Heart left ventricle (tissue), 16 donors: ENCODE measurements at regions of chr11 and their contacts with region 1.

Region 1: DNA sequence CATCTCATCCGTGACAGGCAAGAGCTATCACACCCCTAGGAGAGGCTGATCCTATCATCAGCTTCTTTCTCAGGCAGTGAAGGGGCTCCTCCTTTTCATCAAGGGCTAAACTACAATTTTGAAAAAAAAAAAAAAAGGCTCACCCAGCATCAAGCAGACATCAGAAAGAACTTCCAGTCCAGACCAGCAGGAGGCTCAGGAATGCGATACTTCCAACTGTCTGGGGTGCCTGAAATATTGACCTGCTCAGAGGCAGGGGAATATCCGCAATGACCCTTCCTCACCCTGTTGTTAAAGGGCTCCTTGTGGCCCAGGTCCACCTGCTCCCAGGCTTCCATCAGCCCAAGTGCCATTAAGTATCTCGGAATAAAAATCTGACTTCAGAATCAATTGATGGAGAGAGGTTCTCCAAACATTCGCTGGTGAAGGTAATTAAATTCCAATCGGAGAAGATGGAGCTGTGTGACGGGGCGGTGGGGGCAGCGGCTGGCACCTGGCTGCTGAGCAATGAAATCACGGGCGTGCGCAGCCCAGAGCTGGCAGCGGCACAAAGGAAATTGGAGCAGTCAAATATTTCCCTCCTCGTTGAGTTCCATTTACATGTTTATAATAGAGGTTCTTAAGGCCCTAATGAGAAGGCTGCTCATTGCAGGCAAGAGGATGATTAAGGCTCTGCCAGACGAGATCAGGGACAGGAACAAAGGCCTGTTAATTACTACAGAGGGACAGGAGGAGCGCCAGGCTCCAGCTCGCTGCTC is 69.0 kb upstream of the THY1 start:
- DNase-seq: peak in 1 of 5 donors; percentile 9
- ATAC-seq: no peak
- H3K4me3 ChIP-seq: no peak overlapping the region
- H3K27ac ChIP-seq: no peak overlapping the region
- H3K4me1 ChIP-seq: no peaks in the 10 kb centered on the region
- H3K27me3 ChIP-seq: peaks cover 0 to 8% (median 0%) of the 10 kb centered on the region in 9 donors
- CTCF ChIP-seq: peak in 1 of 12 donors; percentile 13
- POLR2A ChIP-seq: no peak

Region 2: GRCh38 chr11:119533921-119534736 is 42.2 kb after region 1 on chr11:
- intact Hi-C with region 1: loop called in 1 of 10 experiments (anchors 5 kb)
- DNase-seq: peak; percentile 49 to 85 (median 64)
- ATAC-seq: peak in 3 of 4 donors; percentile 75 to 91 (median 82)
- H3K4me3 ChIP-seq: no peak overlapping the region
- H3K27ac ChIP-seq: no peak overlapping the region
- H3K4me1 ChIP-seq: peaks cover 0 to 15% (median 0%) of the 10 kb centered on the region in 12 donors
- H3K27me3 ChIP-seq: peaks cover 0 to 28% (median 0%) of the 10 kb centered on the region in 9 donors
- CTCF ChIP-seq: peak; percentile 67 to 92 (median 84)
- POLR2A ChIP-seq: no peak

Region 3: DNA sequence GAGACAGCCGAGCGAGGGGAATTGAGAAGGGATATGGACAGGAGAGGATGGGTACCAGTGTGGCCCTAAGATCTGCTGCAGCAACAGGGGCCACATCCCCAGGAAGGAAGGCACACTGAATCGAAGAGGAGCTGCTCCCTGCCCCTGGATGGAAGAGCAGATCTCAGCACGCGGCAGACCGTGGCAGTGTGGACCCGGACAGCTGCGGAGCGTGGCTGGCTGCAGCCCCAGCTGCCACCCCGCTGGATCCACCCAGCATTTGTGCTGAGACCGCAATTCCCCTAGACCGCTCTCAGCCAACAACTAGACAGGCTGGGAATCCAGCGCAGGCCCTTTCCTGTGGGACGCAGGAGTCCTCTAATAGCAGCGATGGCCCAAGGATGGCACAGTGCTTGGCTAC is 142.4 kb after region 1 on chr11:
- intact Hi-C with region 1: loop called in 1 of 10 experiments (anchors 10 kb)
- DNase-seq: no peak
- ATAC-seq: no peak
- H3K4me3 ChIP-seq: no peak overlapping the region
- H3K27ac ChIP-seq: no peak overlapping the region
- H3K4me1 ChIP-seq: no peaks in the 10 kb centered on the region
- H3K27me3 ChIP-seq: peaks cover 0 to 7% (median 0%) of the 10 kb centered on the region in 9 donors
- CTCF ChIP-seq: no peak
- POLR2A ChIP-seq: no peak